Head of caudate nucleus (tissue), 42 donors: ENCODE measurements at regions of chr3 and their contacts with region 1.

Region 1: DNA sequence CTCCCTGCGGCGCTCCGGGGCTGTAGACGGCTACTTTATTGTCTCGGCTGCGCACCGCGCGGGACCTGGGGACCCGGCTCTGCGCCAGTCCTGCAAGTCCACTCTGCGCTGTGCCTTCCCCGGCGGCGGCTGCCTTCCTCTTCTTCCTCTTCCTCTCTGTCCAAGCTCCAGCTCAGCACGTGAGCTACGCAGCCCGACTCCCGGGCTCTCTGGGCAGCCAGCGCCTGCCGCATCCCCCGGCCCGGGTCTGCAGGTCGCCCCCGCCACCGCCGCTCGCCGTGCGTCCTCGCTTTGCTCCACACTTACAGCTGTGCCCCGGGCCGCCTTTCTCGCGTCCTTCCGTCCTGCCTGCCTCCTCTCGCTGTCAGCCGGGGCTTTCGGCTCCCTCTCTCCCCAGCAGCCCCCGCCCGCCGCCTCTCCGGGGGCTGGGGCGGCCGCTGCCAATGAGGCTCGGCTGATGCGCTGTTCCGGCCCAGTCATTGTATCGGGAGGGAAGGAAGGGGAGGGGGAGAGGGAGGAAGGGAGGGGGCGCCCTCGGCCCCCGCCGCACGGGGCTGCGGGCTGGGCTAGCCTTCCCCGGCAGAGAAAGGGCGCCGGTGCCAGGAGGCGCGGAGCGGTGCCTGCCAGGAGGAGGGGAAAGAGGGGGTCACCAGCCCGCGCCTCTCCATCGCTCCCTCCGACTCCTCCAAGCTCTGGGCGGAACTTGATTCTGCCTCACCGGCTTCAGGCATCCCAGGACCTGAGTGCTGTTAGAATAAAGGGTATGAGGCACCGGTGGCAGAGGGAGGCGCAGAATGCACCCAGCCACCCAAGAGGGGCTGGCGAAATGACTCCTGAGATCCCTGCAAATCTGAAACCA is 156.6 kb upstream of the FRMD4B start:
- DNase-seq: peak; percentile 68 to 94 (median 86)

Region 2: GRCh38 chr3:69439643-69440270 is 102.7 kb before region 1 on chr3:
- intact Hi-C with region 1: loop called (anchors 10 kb)
- DNase-seq: peak in 4 of 42 donors; percentile 28 to 58 (median 34)

Region 3: DNA sequence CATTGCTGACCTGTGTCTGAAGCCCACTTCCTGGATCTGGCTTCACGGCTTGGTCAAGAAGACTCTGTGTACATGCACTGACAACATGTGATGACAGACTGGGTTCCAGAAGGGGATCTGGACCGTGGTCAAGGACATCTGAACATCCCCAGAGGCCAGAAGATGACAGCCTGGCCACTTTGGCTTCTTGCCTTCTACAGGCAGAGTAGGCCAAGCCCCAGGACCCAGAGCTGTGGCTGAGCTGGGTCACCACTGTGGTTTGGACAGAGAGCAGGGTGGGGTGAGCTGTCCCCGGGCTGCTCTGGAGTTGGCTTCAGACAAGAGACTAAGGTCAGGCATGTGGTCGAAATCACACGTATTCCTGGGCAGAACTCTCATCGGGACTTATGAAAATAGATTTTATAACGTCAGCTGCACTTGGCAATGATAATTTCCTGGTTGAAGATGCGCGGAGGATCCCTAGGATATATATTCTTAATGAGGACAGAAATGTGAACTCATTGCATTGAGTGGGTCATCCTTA is 42.5 kb before region 1 on chr3:
- intact Hi-C with region 1: no loop called
- DNase-seq: peak; percentile 13 to 84 (median 46)